Natural killer cell (primary cell): ENCODE measurements at regions of chr21 and their contacts with region 1.

Region 1: DNA sequence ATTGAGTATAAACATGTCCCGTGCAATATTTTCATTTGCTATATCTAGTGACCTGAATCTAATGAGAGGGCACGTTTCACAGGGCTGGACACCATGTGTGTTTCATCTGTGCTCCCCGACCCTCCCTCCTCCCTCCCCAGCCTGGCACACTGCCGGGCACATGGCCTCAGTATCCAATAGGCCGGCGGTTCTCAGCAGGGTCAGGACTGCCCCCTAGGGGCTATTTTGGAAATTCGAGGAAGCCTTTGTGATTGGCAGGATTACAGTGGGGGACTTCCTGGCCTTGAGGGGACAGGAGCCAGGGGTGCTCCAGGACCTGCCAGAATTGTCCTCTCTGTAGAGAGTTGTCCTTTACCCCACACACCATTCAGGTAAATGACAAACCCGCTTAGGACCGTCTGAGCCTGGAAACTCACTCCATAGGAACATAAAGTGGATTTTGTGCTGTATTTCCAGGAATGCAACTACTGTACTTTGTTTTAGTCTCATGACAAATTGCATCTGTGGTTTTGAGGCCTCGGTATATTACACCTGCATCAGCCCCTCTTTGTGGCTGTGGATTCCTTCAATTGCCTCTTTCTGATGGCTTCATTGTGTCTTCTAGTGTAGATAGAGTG is 109.5 kb upstream of the SIM2 start:
- DNase-seq: no peak
- ATAC-seq: peak; percentile 52 to 85 (median 52)
- H3K4me3 ChIP-seq: no peak overlapping the region
- H3K4me3 Mint-ChIP-seq: no peak overlapping the region
- H3K27ac ChIP-seq: no peak overlapping the region
- H3K27ac Mint-ChIP-seq: no peak overlapping the region
- H3K4me1 ChIP-seq: no peaks in the 10 kb centered on the region
- H3K4me1 Mint-ChIP-seq: no peaks in the 10 kb centered on the region
- H3K27me3 ChIP-seq: no peaks in the 10 kb centered on the region
- H3K27me3 Mint-ChIP-seq: peaks cover 3 to 8% of the 10 kb centered on the region in 2 donors
- CTCF ChIP-seq: peak; percentile 42

Region 2: DNA sequence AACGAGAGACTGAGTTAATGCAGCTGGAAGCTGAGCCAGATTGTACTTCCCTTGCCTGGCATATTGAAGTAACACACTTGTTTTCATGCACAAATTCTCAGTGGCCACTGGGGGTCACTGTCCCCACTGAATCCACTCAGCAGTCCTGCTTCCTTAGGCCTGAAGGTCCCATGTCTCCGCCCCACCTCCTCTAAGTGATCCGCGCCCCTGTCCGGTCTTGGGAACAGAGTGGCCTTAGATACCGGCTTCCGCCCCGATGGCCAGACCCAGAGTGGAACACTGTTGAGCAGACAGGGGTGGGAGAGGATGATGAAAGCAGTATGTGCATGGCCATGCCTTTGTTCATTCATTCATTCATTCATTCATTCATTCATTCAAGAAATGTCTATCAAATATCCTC is 169.5 kb before region 1 on chr21:
- intact Hi-C with region 1: loop called (anchors 1 kb)
- DNase-seq: peak; percentile 51 to 56
- ATAC-seq: peak; percentile 60 to 85 (median 84)
- H3K4me3 ChIP-seq: no peak overlapping the region
- H3K4me3 Mint-ChIP-seq: no peak overlapping the region
- H3K27ac ChIP-seq: no peak overlapping the region
- H3K27ac Mint-ChIP-seq: peak overlapping the region in 1 of 2 donors; percentile 54
- H3K4me1 ChIP-seq: peaks cover 20% of the 10 kb centered on the region
- H3K4me1 Mint-ChIP-seq: peaks cover 24 to 33% of the 10 kb centered on the region in 2 donors
- H3K27me3 ChIP-seq: no peaks in the 10 kb centered on the region
- H3K27me3 Mint-ChIP-seq: no peaks in the 10 kb centered on the region
- CTCF ChIP-seq: peak; percentile 71

Region 3: GRCh38 chr21:36504067-36505058 is 85.1 kb before region 1 on chr21:
- intact Hi-C with region 1: loop called (anchors 5 kb)
- DNase-seq: peak in 1 of 2 donors; percentile 77
- ATAC-seq: peak; percentile 46 to 60 (median 54)
- H3K4me3 ChIP-seq: no peak overlapping the region
- H3K4me3 Mint-ChIP-seq: no peak overlapping the region
- H3K27ac ChIP-seq: no peak overlapping the region
- H3K27ac Mint-ChIP-seq: no peak overlapping the region
- H3K4me1 ChIP-seq: peaks cover 17% of the 10 kb centered on the region
- H3K4me1 Mint-ChIP-seq: peaks cover 25 to 31% of the 10 kb centered on the region in 2 donors
- H3K27me3 ChIP-seq: no peaks in the 10 kb centered on the region
- H3K27me3 Mint-ChIP-seq: no peaks in the 10 kb centered on the region
- CTCF ChIP-seq: peak; percentile 92

Region 4: GRCh38 chr21:36624105-36624504 is 34.6 kb after region 1 on chr21:
- intact Hi-C with region 1: no loop called
- DNase-seq: no peak
- ATAC-seq: no peak
- H3K4me3 ChIP-seq: no peak overlapping the region
- H3K4me3 Mint-ChIP-seq: no peak overlapping the region
- H3K27ac ChIP-seq: no peak overlapping the region
- H3K27ac Mint-ChIP-seq: no peak overlapping the region
- H3K4me1 ChIP-seq: no peaks in the 10 kb centered on the region
- H3K4me1 Mint-ChIP-seq: no peaks in the 10 kb centered on the region
- H3K27me3 ChIP-seq: no peaks in the 10 kb centered on the region
- H3K27me3 Mint-ChIP-seq: peaks cover 6 to 9% of the 10 kb centered on the region in 2 donors
- CTCF ChIP-seq: no peak